H1 (cell line): ENCODE measurements at regions of chr5 and their contacts with region 1.

Region 1: DNA sequence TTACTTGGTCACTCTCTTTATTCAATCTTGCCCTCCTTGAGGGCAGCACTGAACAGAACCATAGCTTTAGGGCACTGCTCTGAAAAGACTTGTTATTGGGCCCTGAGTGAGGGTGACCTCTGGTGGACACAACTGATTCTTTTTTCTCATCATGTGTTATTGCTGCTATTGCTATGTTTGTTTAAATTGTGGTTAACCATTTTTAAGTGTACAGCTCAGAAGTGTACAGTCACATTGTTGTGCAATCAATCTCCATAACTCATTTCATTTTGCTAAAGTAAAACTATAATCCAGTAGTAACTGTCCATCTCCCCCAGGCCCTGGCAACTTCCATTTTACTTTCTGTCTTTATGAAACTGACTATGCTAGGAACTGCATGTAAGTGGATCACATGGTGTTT is 351.1 kb upstream of the RIOK2 start:
- DNase-seq: no peak
- H3K4me3 ChIP-seq: no peak overlapping the region
- H3K27ac ChIP-seq: no peak overlapping the region
- H3K4me1 ChIP-seq: no peaks in the 10 kb centered on the region
- H3K27me3 ChIP-seq: no peaks in the 10 kb centered on the region
- CTCF ChIP-seq: peak in 2 of 3 experiments; percentile 66 to 75; a peak in 3 of 4 replicates
- EP300 ChIP-seq: no peak
- POLR2A ChIP-seq: no peak
- RAD21 ChIP-seq: peak; percentile 80 to 88

Region 2: GRCh38 chr5:97250113-97250512 is 284.1 kb before region 1 on chr5:
- CTCF ChIA-PET with region 1: interaction called, 12 read pairs
- POLR2A ChIA-PET with region 1: no interaction called
- DNase-seq: no peak
- H3K4me3 ChIP-seq: no peak overlapping the region
- H3K27ac ChIP-seq: no peak overlapping the region
- H3K4me1 ChIP-seq: no peaks in the 10 kb centered on the region
- H3K27me3 ChIP-seq: no peaks in the 10 kb centered on the region
- CTCF ChIP-seq: no peak
- EP300 ChIP-seq: no peak
- POLR2A ChIP-seq: no peak
- RAD21 ChIP-seq: no peak

Region 3: DNA sequence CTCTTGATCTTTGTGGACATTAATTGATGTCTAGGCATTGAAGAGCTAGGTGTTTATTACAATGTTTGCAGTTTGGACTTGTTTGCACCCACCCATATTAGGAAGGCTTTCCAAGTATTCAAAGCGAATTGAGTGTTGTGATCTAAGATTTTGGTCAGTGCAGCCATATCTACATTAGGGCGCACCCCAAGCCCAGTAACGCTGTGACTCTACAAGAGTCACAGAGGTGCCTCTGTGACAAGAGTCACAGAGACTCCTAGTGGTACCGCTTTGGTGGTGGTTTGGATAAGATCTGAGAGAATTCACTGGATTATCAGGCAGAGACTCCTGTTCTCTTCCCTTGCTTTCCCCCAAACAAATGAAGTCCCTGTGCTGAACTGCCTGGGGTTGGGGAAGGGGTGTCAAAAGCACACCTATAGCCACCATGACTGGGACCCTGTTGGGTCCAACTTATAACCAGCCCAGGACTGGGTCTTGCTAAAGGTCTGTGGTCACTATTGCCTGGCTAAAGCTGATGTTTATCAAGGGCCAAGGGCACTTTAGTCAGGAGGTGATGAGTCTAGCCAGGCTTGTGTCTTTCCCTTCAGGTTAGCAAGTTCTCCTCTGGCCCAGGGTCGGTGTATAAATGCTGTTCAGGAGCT is 237.0 kb before region 1 on chr5:
- CTCF ChIA-PET with region 1: interaction called, 49 read pairs
- POLR2A ChIA-PET with region 1: no interaction called
- DNase-seq: peak; percentile 21 to 59
- H3K4me3 ChIP-seq: no peak overlapping the region
- H3K27ac ChIP-seq: no peak overlapping the region
- H3K4me1 ChIP-seq: no peaks in the 10 kb centered on the region
- H3K27me3 ChIP-seq: no peaks in the 10 kb centered on the region
- CTCF ChIP-seq: peak; percentile 19 to 97 (median 75)
- EP300 ChIP-seq: no peak
- POLR2A ChIP-seq: no peak
- RAD21 ChIP-seq: peak; percentile 87

Region 4: DNA sequence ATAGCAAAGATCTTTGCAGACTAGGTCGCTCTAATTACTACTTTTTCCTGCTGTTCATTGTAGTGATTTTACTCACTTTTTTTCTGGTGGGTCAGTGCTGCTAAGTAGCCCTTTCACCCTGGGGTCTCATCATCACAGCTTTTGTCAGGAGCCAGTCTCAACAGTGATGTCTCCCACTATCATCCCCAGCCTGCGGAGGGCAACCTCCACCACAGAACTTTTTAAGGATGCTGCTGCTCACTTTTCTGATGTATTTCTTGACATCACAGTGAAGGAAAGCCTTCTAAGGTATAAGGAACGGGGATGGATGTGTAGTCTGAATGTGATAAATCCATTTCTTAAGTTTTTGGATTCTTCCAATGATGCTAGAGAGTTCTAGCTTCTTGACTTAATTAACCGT is 108.7 kb before region 1 on chr5:
- CTCF ChIA-PET with region 1: interaction called, 51 read pairs
- POLR2A ChIA-PET with region 1: no interaction called
- DNase-seq: no peak
- H3K4me3 ChIP-seq: no peak overlapping the region
- H3K27ac ChIP-seq: no peak overlapping the region
- H3K4me1 ChIP-seq: no peaks in the 10 kb centered on the region
- H3K27me3 ChIP-seq: no peaks in the 10 kb centered on the region
- CTCF ChIP-seq: peak; percentile 49 to 69 (median 54)
- EP300 ChIP-seq: no peak
- POLR2A ChIP-seq: no peak
- RAD21 ChIP-seq: peak; percentile 77 to 85

Region 5: DNA sequence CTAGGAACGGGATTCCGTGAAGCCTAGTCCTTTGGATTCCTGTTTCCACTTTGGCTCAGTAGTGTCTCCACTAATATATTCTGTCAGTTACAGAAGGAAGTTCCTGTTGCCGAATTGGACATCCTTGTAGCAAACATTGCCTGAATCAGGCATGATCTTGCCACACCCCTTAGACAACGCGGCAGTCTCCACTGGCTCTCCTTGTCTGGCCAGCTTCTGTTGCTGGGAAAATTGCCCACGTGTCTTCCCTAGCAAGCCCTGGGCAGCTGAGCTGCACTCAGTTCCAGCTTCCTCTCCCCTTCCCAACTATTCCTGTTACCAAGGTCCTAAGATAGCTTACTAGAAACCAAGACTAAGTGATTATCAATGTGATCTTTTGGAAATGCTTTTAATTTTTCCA is 34.6 kb before region 1 on chr5:
- CTCF ChIA-PET with region 1: interaction called, 10 read pairs
- POLR2A ChIA-PET with region 1: no interaction called
- DNase-seq: no peak
- H3K4me3 ChIP-seq: no peak overlapping the region
- H3K27ac ChIP-seq: no peak overlapping the region
- H3K4me1 ChIP-seq: no peaks in the 10 kb centered on the region
- H3K27me3 ChIP-seq: no peaks in the 10 kb centered on the region
- CTCF ChIP-seq: no peak
- EP300 ChIP-seq: no peak
- POLR2A ChIP-seq: no peak
- RAD21 ChIP-seq: no peak

Region 6: DNA sequence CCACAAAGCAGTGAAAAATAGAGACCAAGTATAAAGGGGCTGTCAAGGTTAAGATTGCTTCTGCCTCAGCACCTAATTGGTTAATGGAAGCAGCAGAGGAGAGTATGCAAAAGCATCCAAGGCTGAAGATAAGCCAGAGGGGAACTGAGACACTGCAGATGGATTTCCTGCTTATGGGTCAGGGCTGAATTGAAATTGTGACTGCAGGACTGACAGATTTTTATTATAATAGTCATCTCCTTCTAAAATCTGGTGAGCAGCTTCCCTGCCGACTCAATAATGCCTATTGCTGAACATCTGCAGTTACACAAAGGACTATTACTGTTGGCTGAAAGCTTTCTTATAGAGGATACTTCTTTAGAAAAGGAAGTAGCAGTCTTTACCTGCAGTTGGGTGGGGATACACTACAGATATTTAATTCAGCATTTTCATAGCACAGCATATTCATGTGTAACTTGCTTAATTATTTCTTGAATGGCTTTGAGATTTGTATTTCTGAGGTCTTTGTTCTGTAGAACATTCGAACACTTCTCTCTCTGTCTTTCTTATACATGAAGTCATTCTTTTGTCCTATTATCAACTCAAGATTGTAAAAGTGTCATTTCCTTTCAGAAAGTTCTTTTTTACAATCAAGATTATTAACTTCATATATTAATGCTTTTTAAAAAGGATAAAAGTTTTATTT is 11.9 kb after region 1 on chr5:
- CTCF ChIA-PET with region 1: interaction called, 10 read pairs
- POLR2A ChIA-PET with region 1: interaction called, 3 read pairs
- DNase-seq: no peak
- H3K4me3 ChIP-seq: no peak overlapping the region
- H3K27ac ChIP-seq: no peak overlapping the region
- H3K4me1 ChIP-seq: peaks cover 0 to 3% (median under 1%) of the 10 kb centered on the region in 4 experiments; a peak in 3 of 7 replicates
- H3K27me3 ChIP-seq: no peaks in the 10 kb centered on the region
- CTCF ChIP-seq: no peak
- EP300 ChIP-seq: no peak
- POLR2A ChIP-seq: no peak
- RAD21 ChIP-seq: no peak